Activated naive CD8-positive, alpha-beta T cell treated with anti-CD3 and anti-CD28 coated beads, Interleukin-2, amount 10 ng/mL, durations not matched to agents 7 days and 5 days (primary cell): ENCODE measurements at regions of chr15 and their contacts with region 1.

Region 1: DNA sequence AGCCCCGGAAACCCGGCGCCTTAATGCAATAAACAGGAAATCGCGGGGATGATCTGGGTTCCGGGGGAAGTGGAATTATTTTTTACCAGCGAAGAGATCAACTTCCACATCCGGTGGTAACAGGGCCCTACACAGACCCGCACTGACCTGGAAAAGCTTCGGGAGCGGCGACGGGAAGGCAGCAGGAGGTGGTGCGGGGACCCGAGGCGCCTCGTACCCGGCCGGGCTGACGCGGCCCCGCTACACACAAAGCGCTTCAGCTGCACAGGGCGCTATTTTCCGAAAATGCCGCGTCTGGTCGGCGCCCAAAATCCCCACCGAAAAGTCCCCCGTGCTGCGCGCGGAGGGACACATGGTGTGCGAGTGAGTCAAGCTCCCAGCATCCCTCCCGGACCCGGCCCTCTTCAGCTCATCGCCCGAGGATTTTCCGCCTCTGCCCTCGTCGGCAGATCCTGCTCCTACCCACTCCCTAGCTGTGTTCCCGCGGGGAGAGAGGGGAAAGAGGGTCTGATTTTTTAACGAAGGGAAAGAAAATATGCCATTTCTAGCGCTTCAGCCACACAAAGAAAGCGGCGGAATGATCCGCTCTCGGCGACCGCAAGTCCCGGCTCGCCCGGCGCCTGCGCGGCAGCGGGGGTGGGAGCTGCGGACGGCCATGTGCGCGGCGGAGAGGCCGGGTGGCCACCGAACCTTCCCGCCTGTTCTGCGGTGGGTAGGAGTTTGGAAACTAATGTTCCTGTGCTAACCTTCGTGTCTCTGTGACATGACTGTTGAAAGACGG is at the start of gene GABPB1:
- DNase-seq: peak; percentile 93
- ATAC-seq: peak; percentile 51
- H3K4me3 Mint-ChIP-seq: peak within 1 kb of the TSS; percentile 98
- H3K27ac Mint-ChIP-seq: peak within 1 kb of the TSS; percentile 100
- H3K4me1 Mint-ChIP-seq: peaks cover 39% of the 10 kb centered on the region
- H3K27me3 Mint-ChIP-seq: no peaks in the 10 kb centered on the region
- total RNA-seq, gene GABPB1: 23.9 to 26.7 TPM

Region 2: DNA sequence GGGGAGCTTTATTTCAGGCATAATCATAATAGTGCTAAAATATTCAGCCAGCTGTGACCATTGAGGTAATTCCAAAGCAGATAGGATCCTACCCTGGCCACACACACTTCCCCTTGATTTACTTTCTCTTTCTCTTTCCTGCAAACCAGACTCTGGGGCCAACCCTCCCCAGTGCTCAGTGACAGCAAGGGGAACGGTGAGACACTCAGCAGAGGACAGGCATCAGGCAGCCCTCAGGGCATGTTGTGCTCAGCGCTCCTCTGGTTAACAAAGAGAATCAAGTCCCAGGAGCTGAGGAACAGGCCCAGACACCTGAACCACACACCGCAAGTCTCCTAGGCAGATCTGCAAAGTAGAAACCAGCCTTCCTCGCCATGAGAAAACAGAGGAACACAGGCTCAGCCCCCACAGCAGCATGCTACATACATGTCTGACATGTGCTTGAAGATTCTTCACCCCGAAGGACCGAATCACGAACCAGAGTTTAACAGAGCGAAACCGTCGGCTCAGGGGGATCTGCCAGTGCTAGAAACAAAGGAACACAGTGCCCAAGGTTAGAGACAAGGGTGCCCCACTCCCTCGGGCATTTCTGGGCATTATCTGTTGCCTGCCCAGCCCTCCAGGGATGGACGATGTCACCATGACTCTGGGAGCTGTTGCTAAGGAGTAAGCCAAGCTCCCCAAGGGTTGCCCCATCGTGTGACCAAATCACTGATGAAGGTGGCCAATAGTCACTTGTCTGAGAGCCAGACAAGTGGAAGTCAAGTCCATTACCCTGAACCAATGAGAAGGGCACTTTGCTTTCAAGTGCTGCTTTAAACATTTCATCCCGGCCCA is 107.0 kb before region 1 on chr15:
- POLR2A ChIA-PET with region 1: interaction called, 11 read pairs
- DNase-seq: peak; percentile 68
- ATAC-seq: peak; percentile 100
- H3K4me3 Mint-ChIP-seq: peak overlapping the region; percentile 82
- H3K27ac Mint-ChIP-seq: peak overlapping the region; percentile 97
- H3K4me1 Mint-ChIP-seq: peaks cover 46% of the 10 kb centered on the region
- H3K27me3 Mint-ChIP-seq: no peaks in the 10 kb centered on the region

Region 3: DNA sequence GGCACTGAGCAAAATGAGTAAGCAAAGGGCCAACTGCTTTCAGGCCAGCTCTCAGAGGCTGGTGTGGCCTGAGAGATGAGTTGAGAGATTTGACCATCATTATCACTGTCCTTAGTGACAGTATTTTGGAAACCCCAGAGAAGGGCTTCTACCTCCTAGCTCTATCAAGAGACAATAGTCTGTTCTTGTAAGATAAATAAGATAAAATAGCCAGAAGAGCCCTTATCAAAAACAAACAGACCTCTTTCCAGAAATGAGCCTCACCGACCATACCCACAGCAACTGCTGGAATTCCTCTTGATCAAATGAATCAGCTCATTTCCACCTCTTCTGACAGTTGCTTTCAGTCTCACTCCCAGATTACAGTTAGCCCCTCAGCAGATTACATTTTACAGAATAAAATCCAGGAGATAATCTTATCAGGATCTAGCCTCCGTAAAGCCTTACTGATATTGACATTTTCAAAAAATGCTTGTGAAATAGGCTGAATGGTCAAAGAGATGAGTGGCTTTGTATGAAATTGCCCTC is 94.0 kb before region 1 on chr15:
- POLR2A ChIA-PET with region 1: interaction called, 26 read pairs
- DNase-seq: no peak
- ATAC-seq: no peak
- H3K4me3 Mint-ChIP-seq: peak overlapping the region; percentile 41
- H3K27ac Mint-ChIP-seq: peak overlapping the region; percentile 83
- H3K4me1 Mint-ChIP-seq: peaks cover 56% of the 10 kb centered on the region
- H3K27me3 Mint-ChIP-seq: no peaks in the 10 kb centered on the region

Region 4: DNA sequence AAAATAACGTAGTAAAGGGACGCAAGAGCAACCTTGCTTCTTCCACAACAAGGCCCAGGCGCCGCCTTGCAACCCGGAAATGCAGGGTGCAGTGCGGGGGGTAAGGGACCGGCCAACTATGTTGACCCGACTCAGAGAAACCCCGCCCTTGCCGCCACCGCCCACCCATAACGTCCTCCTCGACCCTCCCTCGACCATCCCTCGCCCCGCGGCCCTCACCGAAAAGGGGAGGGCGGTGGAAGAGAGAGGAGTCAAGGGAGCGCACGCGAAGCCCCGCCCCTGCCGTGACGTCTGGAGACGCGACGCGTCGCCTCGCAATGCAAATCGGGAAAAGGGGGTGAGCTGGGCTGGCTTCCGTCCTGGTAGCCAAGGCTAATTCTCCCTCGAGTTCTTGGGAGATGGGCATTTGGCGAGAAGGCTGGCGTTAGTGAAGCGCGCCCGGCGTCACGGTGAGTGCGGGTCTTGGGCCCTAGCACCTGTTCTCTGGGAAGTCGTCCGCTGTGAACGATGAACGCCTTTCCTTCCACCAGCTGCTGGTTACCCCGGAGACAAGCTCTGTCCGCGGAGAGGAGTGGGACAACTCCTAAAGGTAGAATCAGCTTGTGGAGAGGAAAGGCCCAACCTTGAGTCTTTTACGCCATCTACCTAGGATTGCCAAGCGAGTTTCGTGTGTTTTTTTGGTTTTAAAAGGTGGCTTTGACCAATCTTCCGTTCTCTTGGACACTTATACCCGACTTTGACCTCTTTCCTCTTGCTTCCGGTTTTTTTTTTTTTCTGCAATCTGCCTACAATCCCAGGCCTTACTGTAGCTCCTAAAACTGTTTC is 69.2 kb after region 1 on chr15 and contains the start of gene USP8:
- POLR2A ChIA-PET with region 1: interaction called, 43 read pairs
- DNase-seq: peak; percentile 96
- ATAC-seq: peak; percentile 97
- H3K4me3 Mint-ChIP-seq: peak within 1 kb of the TSS; percentile 100
- H3K27ac Mint-ChIP-seq: peak within 1 kb of the TSS; percentile 93
- H3K4me1 Mint-ChIP-seq: peaks cover 18% of the 10 kb centered on the region
- H3K27me3 Mint-ChIP-seq: no peaks in the 10 kb centered on the region
- total RNA-seq, gene USP8: 58.0 to 59.4 TPM

Region 5: GRCh38 chr15:50765195-50765973 is 410.4 kb after region 1 on chr15 and contains the start of gene SPPL2A:
- POLR2A ChIA-PET with region 1: interaction called, 17 read pairs
- DNase-seq: peak; percentile 90
- ATAC-seq: peak; percentile 95
- H3K4me3 Mint-ChIP-seq: peak within 1 kb of the TSS; percentile 97
- H3K27ac Mint-ChIP-seq: peak within 1 kb of the TSS; percentile 96
- H3K4me1 Mint-ChIP-seq: peaks cover 33% of the 10 kb centered on the region
- H3K27me3 Mint-ChIP-seq: peaks cover 2% of the 10 kb centered on the region
- total RNA-seq, gene SPPL2A: 72.3 to 74.1 TPM

Region 6: GRCh38 chr15:50880651-50881114 is 525.7 kb after region 1 on chr15:
- POLR2A ChIA-PET with region 1: interaction called, 18 read pairs
- DNase-seq: no peak
- ATAC-seq: peak; percentile 39
- H3K4me3 Mint-ChIP-seq: peak overlapping the region; percentile 50
- H3K27ac Mint-ChIP-seq: peak overlapping the region; percentile 97
- H3K4me1 Mint-ChIP-seq: peaks cover 75% of the 10 kb centered on the region
- H3K27me3 Mint-ChIP-seq: no peaks in the 10 kb centered on the region